WTC11 (cell line): ENCODE measurements at regions of chr6 and their contacts with region 1.

Region 1: GRCh38 chr6:41551086-41551700 is 5.0 kb downstream of the FOXP4 start:
- DNase-seq: no peak
- ATAC-seq: no peak
- H3K4me3 Mint-ChIP-seq: no peak overlapping the region
- H3K27ac Mint-ChIP-seq: no peak overlapping the region
- H3K4me1 Mint-ChIP-seq: peaks cover 77% of the 10 kb centered on the region
- H3K27me3 Mint-ChIP-seq: peaks cover 91% of the 10 kb centered on the region
- CTCF ChIP-seq: no peak

Region 2: GRCh38 chr6:41578217-41579087 is 27.3 kb after region 1 on chr6:
- CTCF ChIA-PET with region 1: interaction called, 13 read pairs
- POLR2A ChIA-PET with region 1: interaction called, 7 read pairs
- DNase-seq: peak; percentile 81
- ATAC-seq: peak; percentile 71
- H3K4me3 Mint-ChIP-seq: peak overlapping the region; percentile 57
- H3K27ac Mint-ChIP-seq: peak overlapping the region; percentile 99
- H3K4me1 Mint-ChIP-seq: peaks cover 83% of the 10 kb centered on the region
- H3K27me3 Mint-ChIP-seq: no peaks in the 10 kb centered on the region; the same call in 1 of the 2 replicates
- CTCF ChIP-seq: no peak

Region 3: DNA sequence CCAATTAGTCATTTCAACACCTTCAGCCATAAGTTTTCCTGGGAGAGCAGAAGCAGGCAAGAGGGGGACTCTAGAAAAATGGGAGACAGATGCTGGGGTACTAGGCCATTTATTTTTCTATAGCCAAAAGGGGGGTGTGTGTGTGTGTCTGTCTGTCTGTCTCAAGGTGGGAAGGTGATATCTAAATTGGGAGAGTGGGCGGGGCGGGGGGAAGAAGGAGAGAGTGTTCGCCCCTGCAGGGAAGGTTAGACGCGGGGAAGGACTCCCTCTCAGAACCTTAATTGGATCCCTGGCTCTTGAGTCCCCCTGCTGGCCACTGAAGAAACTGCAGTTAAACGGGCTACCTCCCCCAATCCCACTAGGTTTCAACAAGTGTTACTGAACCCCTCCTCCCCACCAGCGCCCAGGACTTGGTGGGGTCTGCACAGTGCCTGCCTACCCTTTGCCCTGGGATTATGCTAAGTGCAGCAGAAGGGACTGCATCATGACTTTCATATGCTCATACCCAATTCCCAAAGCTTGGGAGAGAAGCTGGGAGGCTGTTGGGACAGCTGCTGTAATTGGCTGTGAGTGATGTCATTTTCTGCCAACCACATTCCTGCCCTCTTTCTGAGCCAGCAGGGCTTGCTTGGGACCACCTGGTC is 40.8 kb after region 1 on chr6:
- CTCF ChIA-PET with region 1: interaction called, 16 read pairs
- POLR2A ChIA-PET with region 1: no interaction called
- DNase-seq: peak; percentile 90
- ATAC-seq: peak; percentile 78
- H3K4me3 Mint-ChIP-seq: no peak overlapping the region
- H3K27ac Mint-ChIP-seq: no peak overlapping the region
- H3K4me1 Mint-ChIP-seq: peaks cover 41% of the 10 kb centered on the region
- H3K27me3 Mint-ChIP-seq: peaks cover 7% of the 10 kb centered on the region; the same call in 1 of the 2 replicates
- CTCF ChIP-seq: peak; percentile 98